Left ventricle myocardium inferior (tissue), 1 donor: ENCODE measurements at regions of chr1 and their contacts with region 1.

Region 1: DNA sequence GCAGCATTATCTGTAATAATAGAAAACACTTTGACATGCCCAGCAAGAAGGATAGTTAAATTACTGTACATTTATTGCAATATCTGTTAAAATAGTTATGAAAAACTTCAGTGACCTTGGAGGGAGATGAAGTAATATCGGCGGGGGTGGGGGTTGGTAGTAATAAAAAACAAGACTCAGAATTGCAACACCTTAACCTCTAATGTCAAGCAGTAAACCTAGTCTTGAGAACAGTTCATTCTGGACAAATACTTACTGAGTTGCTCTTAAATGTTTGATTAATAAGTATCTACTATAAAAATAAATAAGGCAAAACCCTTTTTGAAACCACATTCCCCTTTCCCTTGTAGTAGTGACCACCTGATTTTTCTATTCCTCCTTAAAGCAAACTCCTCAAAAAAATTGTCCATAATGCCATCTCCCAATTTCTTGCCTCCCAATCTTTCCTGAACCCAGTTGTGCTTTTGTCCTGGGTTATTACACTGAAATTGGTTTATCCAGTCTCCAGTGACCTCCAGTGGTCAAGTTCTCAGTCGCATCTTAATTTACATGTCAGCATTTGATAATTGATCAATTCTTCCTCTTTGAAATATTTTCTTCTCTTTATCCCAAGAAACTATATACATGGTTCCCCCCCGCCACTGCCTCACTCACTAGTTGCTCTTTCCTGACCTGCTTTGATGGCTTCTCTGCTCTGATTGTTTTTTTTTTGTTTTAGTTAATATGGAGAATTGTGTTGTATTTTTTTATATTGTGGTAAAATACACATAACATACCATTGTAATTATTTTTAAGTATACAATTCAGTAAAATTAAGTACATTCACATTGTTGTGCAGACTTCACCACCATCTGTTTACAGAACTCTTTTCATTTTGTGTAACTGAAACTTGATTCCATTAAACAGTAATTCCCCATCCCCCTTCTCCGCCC is 36.8 kb downstream of the RAP1A start:
- DNase-seq: no peak
- H3K4me3 ChIP-seq: no peak overlapping the region
- H3K27ac ChIP-seq: peak overlapping the region; percentile 52
- H3K4me1 ChIP-seq: peaks cover 44% of the 10 kb centered on the region
- H3K27me3 ChIP-seq: no peaks in the 10 kb centered on the region
- CTCF ChIP-seq: peak; percentile 76

Region 2: DNA sequence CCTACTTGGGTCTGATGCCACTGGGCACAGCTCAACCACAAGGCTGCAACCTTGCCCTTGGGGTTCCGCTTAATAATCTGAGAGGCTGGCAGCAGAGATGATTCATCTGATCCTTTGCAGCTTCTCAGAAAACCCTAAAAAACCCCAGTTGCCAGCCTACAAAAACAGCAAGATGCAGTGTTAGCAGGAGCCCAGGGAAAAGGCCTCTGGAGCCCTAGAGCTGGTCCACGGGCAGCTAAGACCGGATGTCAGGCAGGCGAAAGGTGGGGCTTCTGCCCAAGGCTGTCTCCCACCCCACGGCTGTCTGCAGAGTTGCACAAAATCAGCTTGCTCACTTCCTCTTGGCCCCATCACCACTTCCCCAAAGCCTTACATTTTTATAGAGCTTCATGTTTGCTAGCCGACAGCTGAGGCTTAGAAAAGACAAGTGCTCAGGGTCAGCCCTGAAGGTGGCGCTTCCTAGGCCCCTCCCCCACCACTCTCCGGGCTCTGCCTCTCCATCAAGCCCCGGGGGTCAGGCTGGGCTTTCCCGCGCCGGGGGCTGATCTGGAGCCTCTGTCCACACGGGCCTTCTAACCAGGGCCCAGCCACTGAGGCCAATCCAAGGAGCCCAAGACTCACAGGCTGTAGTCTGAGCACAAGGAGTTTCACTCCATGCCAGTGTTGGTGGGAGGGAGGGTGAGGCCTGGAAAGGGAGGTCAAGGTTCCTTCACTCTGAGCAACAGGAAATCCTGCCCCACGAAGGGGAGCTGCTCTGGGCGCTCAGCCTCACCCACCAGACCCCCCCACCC is 148.7 kb before region 1 on chr1:
- intact Hi-C with region 1: loop called (anchors 2 kb)
- DNase-seq: peak; percentile 82
- H3K4me3 ChIP-seq: peak overlapping the region; percentile 55
- H3K27ac ChIP-seq: peak overlapping the region; percentile 92
- H3K4me1 ChIP-seq: peaks cover 59% of the 10 kb centered on the region
- H3K27me3 ChIP-seq: no peaks in the 10 kb centered on the region
- CTCF ChIP-seq: no peak

Region 3: GRCh38 chr1:112011215-112011614 is 354.9 kb after region 1 on chr1:
- intact Hi-C with region 1: no loop called
- DNase-seq: no peak
- H3K4me3 ChIP-seq: no peak overlapping the region
- H3K27ac ChIP-seq: no peak overlapping the region
- H3K4me1 ChIP-seq: no peaks in the 10 kb centered on the region
- H3K27me3 ChIP-seq: no peaks in the 10 kb centered on the region
- CTCF ChIP-seq: no peak